ENCODE measurements at regions of chr15 and their contacts with region 1.

Region 1: GRCh38 chr15:50765195-50765973 is at the start of gene SPPL2A:
- H3K4me3 Mint-ChIP-seq: peak within 1 kb of the TSS; percentile 90
- H3K27ac Mint-ChIP-seq: peak within 1 kb of the TSS; percentile 92
- H3K4me1 Mint-ChIP-seq: peaks cover 51% of the 10 kb centered on the region
- H3K27me3 Mint-ChIP-seq: peaks cover 3% of the 10 kb centered on the region

Region 2: DNA sequence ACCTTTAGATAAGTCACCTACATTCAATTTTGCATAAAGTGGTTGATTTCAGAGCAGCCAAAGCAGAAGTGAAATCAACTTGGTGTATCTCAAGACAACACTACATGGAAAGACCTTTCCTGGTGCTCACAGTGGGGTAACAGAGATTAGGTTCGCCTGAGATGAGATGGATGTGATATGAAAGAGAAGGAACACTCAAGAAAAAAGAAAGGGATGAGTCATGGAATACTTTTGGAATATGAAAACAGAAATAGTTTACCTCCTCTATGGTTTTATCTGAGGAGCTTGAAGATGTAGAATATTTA is 89.7 kb after region 1 on chr15:
- intact Hi-C with region 1: no loop called
- H3K4me3 Mint-ChIP-seq: no peak overlapping the region
- H3K27ac Mint-ChIP-seq: no peak overlapping the region
- H3K4me1 Mint-ChIP-seq: peaks cover 5% of the 10 kb centered on the region
- H3K27me3 Mint-ChIP-seq: no peaks in the 10 kb centered on the region

Region 3: DNA sequence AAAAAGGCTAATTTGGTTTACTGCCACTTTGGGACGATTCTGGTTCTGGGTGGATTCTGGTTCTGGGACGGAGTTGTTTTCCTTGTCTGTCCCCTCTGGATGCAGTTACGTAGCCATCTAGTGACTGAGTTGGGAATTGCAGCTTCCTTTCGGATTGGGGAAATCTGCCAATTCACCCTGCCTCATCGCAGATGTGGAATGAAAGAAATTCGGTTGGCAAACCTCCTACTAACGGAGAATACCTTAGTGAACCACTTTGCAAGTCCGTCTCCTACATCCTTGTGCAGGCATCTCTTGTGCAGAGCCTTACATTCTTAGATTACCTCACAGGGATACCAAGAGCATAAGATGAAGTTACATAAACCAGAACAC is 111.6 kb after region 1 on chr15:
- intact Hi-C with region 1: loop called (anchors 5 kb)
- H3K4me3 Mint-ChIP-seq: peak overlapping the region; percentile 58
- H3K27ac Mint-ChIP-seq: peak overlapping the region; percentile 77
- H3K4me1 Mint-ChIP-seq: peaks cover 65% of the 10 kb centered on the region
- H3K27me3 Mint-ChIP-seq: no peaks in the 10 kb centered on the region

Measured in dendritic cell treated with granulocyte-macrophage colony-stimulating factor and Interleukin-4, amounts not matched to agents 40 ng/mL and 50 ng/mL, for 4 days (primary cell).